ENCODE measurements at regions of chr21 and their contacts with region 1.

Region 1: GRCh38 chr21:36747815-36748383 is 49.0 kb downstream of the SIM2 start:
- DNase-seq: peak; percentile 40 to 64
- ATAC-seq: peak; percentile 68 to 84 (median 76)
- H3K4me3 ChIP-seq: peak overlapping the region; percentile 64
- H3K27ac ChIP-seq: no peak overlapping the region
- H3K4me1 ChIP-seq: peaks cover 9% of the 10 kb centered on the region
- H3K27me3 ChIP-seq: peaks cover 0 to 34% (median 0%) of the 10 kb centered on the region in 3 donors
- CTCF ChIP-seq: peak; percentile 37

Region 2: DNA sequence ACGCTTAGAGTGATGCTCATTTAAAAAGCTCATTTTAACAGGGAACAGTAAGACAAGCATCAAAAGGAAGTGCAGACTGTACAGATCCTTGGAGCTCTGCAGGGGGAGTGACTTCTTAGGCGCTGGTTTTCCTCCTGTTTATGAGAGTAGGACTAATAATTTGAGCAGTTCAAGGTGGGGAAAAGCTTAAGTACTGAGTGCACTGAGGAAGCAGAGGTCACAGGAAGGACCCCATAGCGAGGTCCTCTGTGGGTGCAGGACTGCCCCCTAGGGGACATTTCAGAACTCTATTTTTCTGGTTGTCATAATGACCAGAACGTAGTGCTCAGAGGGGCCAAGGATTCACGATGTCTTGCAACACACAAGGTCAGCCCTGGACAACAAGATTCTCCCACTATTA is 106.5 kb after region 1 on chr21:
- intact Hi-C with region 1: loop called (anchors 5 to 10 kb)
- DNase-seq: no peak
- ATAC-seq: peak in 3 of 4 donors; percentile 74 to 84 (median 77)
- H3K4me3 ChIP-seq: no peak overlapping the region
- H3K27ac ChIP-seq: no peak overlapping the region
- H3K4me1 ChIP-seq: no peaks in the 10 kb centered on the region
- H3K27me3 ChIP-seq: no peaks in the 10 kb centered on the region
- CTCF ChIP-seq: peak; percentile 48

Measured in psoas muscle (tissue), 8 donors.